PC-9 (cell line): ENCODE measurements at regions of chr3 and their contacts with region 1.

Region 1: GRCh38 chr3:129663026-129663446 is 56.6 kb upstream of the PLXND1 start:
- DNase-seq: peak; percentile 91 to 100
- H3K4me3 ChIP-seq: no peak overlapping the region
- H3K27ac ChIP-seq: peak overlapping the region; percentile 98
- H3K4me1 ChIP-seq: peaks cover 93% of the 10 kb centered on the region
- H3K27me3 ChIP-seq: no peaks in the 10 kb centered on the region
- CTCF ChIP-seq: no peak

Region 2: DNA sequence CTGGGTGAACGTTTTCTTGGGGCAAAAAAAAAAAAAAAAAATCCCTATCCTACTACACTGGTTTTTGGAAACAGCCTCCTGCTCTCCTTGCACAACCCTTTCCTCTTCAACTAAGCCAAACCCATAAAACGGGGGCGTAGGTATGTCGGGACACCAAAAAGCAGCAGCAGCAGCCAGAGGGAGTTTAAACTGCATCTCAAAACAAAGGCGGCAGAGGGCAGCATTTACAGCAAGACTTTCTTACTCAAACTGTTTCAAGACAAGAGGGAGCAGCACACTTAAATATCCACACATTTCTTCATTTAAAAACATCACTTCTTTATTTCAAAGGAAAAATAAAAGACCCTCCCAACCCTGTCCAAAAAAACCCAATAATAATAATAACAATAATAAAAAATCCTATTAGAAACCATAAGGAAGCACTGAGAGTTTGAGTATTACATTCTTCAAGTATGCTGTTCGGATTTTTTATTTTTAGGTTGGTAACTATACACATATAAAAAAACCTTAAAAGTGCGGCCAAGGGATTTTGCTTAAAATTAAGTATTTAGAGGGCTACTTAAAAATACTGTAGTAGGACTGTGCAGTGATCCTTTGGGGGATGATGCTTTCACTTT is 12.7 kb before region 1 on chr3:
- CTCF ChIA-PET with region 1: interaction called, 4 read pairs
- POLR2A ChIA-PET with region 1: interaction called, 3 read pairs
- intact Hi-C with region 1: loop called (anchors 1 kb)
- DNase-seq: peak; percentile 68 to 78
- H3K4me3 ChIP-seq: no peak overlapping the region
- H3K27ac ChIP-seq: peak overlapping the region; percentile 91
- H3K4me1 ChIP-seq: peaks cover 64% of the 10 kb centered on the region
- H3K27me3 ChIP-seq: no peaks in the 10 kb centered on the region
- CTCF ChIP-seq: peak; percentile 83

Region 3: GRCh38 chr3:129673882-129674797 is 11.1 kb after region 1 on chr3:
- CTCF ChIA-PET with region 1: interaction called, 5 read pairs
- POLR2A ChIA-PET with region 1: interaction called, 8 read pairs
- intact Hi-C with region 1: loop called (anchors 2 kb)
- DNase-seq: peak in 1 of 2 experiments; percentile 87
- H3K4me3 ChIP-seq: no peak overlapping the region
- H3K27ac ChIP-seq: peak overlapping the region; percentile 77
- H3K4me1 ChIP-seq: peaks cover 30% of the 10 kb centered on the region
- H3K27me3 ChIP-seq: no peaks in the 10 kb centered on the region
- CTCF ChIP-seq: no peak

Region 4: GRCh38 chr3:129694256-129694655 is 31.2 kb after region 1 on chr3:
- CTCF ChIA-PET with region 1: no interaction called
- POLR2A ChIA-PET with region 1: interaction called, 3 read pairs
- intact Hi-C with region 1: loop called (anchors 1 kb)
- DNase-seq: peak; percentile 77 to 99
- H3K4me3 ChIP-seq: no peak overlapping the region; the same call in 1 of the 2 replicates
- H3K27ac ChIP-seq: peak overlapping the region; percentile 91
- H3K4me1 ChIP-seq: peaks cover 56% of the 10 kb centered on the region
- H3K27me3 ChIP-seq: no peaks in the 10 kb centered on the region
- CTCF ChIP-seq: no peak

Region 5: GRCh38 chr3:129702934-129703712 is 40.1 kb after region 1 on chr3:
- CTCF ChIA-PET with region 1: no interaction called
- POLR2A ChIA-PET with region 1: interaction called, 23 read pairs
- intact Hi-C with region 1: no loop called
- DNase-seq: no peak
- H3K4me3 ChIP-seq: no peak overlapping the region
- H3K27ac ChIP-seq: no peak overlapping the region
- H3K4me1 ChIP-seq: peaks cover 7% of the 10 kb centered on the region; the same call in 1 of the 2 replicates
- H3K27me3 ChIP-seq: no peaks in the 10 kb centered on the region
- CTCF ChIP-seq: no peak

Region 6: DNA sequence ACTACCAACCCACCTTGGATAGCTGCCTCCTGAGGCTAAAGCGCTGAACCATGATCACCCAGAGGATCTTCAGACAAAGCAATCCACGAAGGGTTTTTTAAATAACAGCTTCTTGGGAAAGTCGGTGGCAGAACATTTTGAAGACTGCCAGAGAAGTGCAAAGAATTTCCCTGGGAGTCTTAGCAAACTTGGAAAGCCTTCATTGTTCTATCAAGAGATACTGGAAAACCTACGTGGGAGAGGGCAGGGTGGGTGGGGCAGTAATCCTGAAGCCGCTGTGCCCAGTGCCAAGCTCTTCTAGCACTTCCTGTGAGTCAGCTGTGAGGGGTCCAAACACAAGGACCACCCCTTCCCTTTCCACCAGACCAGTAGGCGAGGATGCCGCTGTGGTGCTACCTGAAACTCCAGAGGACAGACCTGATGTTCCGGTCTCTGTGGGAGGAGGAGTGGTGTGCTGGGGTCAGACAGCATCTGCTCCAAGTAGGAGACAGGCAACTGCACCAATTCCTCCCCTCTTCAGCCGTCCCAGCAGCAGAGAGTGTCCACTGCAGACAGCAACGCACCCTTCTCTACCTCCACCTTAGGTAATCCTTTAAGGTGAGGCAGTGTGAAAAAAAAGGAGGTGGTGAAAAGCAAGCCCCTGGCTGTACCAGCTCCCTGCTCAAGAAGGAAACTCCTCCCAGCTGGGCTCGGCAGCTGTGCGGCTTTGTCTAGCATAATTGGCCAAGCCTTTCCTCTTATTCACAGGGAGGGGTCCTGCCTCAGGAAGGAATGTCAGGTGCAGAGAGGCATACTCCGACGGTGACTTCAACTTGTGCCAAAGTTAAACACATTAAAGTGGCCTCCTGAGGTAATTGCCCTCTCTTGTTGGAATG is 131.5 kb after region 1 on chr3:
- CTCF ChIA-PET with region 1: interaction called, 4 read pairs
- POLR2A ChIA-PET with region 1: interaction called, 7 read pairs
- intact Hi-C with region 1: loop called (anchors 1 kb)
- DNase-seq: peak; percentile 93 to 99
- H3K4me3 ChIP-seq: peak overlapping the region; percentile 96
- H3K27ac ChIP-seq: peak overlapping the region; percentile 100
- H3K4me1 ChIP-seq: peaks cover 45% of the 10 kb centered on the region
- H3K27me3 ChIP-seq: no peaks in the 10 kb centered on the region
- CTCF ChIP-seq: no peak

Region 7: DNA sequence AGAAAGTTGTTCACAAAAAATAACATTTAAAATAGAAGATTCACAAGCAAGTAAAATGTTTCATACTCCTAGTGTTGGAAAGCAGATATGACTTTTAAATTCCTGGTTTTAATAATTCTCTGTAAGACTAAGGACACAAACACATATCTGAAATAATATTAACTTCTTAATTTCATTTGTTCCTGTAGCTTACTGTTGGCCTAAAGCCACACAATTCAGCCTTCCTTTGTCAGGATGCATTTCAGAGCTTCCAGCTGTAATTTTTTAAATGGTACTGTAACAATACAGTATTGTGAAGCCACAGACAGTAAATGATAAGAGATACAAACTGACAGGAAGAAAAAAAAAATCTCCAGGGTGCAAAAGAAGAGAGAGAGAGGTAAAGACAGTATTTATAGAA is 146.3 kb after region 1 on chr3:
- CTCF ChIA-PET with region 1: no interaction called
- POLR2A ChIA-PET with region 1: no interaction called
- intact Hi-C with region 1: no loop called
- DNase-seq: no peak
- H3K4me3 ChIP-seq: no peak overlapping the region
- H3K27ac ChIP-seq: 0 out of 2 replicates have a peak overlapping the region, but pooled peaks have one; percentile 19
- H3K4me1 ChIP-seq: no peaks in the 10 kb centered on the region
- H3K27me3 ChIP-seq: no peaks in the 10 kb centered on the region
- CTCF ChIP-seq: no peak

Region 8: DNA sequence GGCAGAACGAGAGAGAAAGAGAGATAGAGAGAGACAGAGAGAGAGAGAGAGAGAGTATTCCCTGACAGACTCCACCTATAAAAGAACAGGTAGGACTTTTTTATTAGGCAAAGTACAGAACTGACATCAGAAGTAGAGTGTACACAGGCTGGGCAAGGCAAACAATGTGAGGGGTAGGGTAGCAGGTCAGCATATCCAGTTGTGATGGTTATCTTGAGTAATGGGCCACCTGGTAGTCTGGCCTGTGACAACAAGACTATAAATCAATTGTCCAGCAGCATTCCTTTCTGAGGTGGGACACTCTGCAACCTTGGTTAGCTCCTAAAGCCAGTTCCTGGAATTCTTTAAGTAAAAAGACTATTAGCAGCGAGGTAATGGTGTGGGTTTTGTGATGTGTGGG is 245.3 kb after region 1 on chr3:
- CTCF ChIA-PET with region 1: no interaction called
- POLR2A ChIA-PET with region 1: no interaction called
- intact Hi-C with region 1: loop called (anchors 1 kb)
- DNase-seq: peak; percentile 74 to 95
- H3K4me3 ChIP-seq: peak overlapping the region; percentile 38; the same call in 1 of the 2 replicates
- H3K27ac ChIP-seq: peak overlapping the region; percentile 72
- H3K4me1 ChIP-seq: peaks cover 27% of the 10 kb centered on the region
- H3K27me3 ChIP-seq: no peaks in the 10 kb centered on the region
- CTCF ChIP-seq: no peak